K562 (cell line): ENCODE measurements at regions of chr9 and their contacts with region 1.

Region 1: GRCh38 chr9:129177791-129178559 is at the start of gene IER5L:
- DNase-seq: peak; percentile 96 to 100 (median 100)
- ATAC-seq: peak; percentile 91
- H3K4me3 ChIP-seq: peak within 1 kb of the TSS; percentile 61
- H3K27ac ChIP-seq: peak within 1 kb of the TSS; percentile 49; the same call in 1 of the 3 replicates
- H3K4me1 ChIP-seq: peaks cover 19 to 64% of the 10 kb centered on the region in 2 experiments; a peak in 4 of 5 replicates
- H3K27me3 ChIP-seq: peaks cover 7 to 8% of the 10 kb centered on the region in 2 experiments; a peak in 3 of 5 replicates
- CTCF ChIP-seq: 0 out of 6 replicates have a peak, but pooled peaks of 1 of the 3 experiments have one; percentile 0
- EP300 ChIP-seq: no peak
- POLR2A ChIP-seq: peak; percentile 88
- RAD21 ChIP-seq: no peak; a peak in 1 of 4 replicates
- polyA plus RNA-seq, gene IER5L: 0.14 to 0.18 TPM

Region 2: DNA sequence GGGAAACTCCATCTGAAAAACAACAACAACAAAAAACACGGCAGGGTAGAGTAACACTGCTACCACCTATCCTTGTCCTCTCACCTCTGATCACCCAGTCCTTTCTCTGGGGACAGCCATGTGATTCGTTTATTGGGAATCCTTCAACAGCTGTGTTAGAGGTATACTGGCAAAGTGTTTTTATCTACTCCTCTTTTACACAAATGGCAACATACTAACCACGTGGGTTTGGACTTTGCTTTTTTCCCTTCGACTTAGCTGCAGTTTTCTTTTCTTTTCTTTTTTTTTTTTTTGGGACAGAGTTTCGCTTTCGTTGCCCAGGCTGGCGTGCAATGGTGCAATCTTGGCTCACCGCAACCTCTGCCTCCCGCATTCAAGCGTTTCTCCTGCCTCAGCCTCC is 500.2 kb before region 1 on chr9:
- CTCF ChIA-PET with region 1: no interaction called
- POLR2A ChIA-PET with region 1: no interaction called
- in situ Hi-C with region 1: no loop called
- intact Hi-C with region 1: no loop called
- DNase-seq: peak in 2 of 4 experiments; percentile 10 to 19
- ATAC-seq: peak; percentile 20; the same call in 2 of the 3 replicates
- H3K4me3 ChIP-seq: no peak overlapping the region
- H3K27ac ChIP-seq: no peak overlapping the region
- H3K4me1 ChIP-seq: peaks cover 2 to 11% of the 10 kb centered on the region in 2 experiments; a peak in 2 of 5 replicates
- H3K27me3 ChIP-seq: no peaks in the 10 kb centered on the region
- CTCF ChIP-seq: no peak
- EP300 ChIP-seq: no peak
- POLR2A ChIP-seq: no peak
- RAD21 ChIP-seq: no peak

Region 3: GRCh38 chr9:129068990-129069861 is 108.7 kb before region 1 on chr9:
- CTCF ChIA-PET with region 1: no interaction called
- POLR2A ChIA-PET with region 1: no interaction called
- in situ Hi-C with region 1: no loop called
- intact Hi-C with region 1: no loop called
- DNase-seq: peak; percentile 83 to 98 (median 90)
- ATAC-seq: peak; percentile 98
- H3K4me3 ChIP-seq: no peak overlapping the region
- H3K27ac ChIP-seq: peak overlapping the region; percentile 92
- H3K4me1 ChIP-seq: peaks cover 44 to 54% of the 10 kb centered on the region in 2 experiments
- H3K27me3 ChIP-seq: no peaks in the 10 kb centered on the region
- CTCF ChIP-seq: peak; percentile 26 to 47 (median 36); a peak in 4 of 6 replicates
- EP300 ChIP-seq: peak; percentile 97
- POLR2A ChIP-seq: no peak
- RAD21 ChIP-seq: peak in 1 of 2 experiments; percentile 18; a peak in 1 of 4 replicates

Region 4: GRCh38 chr9:129166623-129167557 is 11.1 kb before region 1 on chr9:
- CTCF ChIA-PET with region 1: no interaction called
- POLR2A ChIA-PET with region 1: interaction called, 11 read pairs
- in situ Hi-C with region 1: no loop called
- intact Hi-C with region 1: no loop called
- DNase-seq: peak; percentile 82 to 92 (median 90)
- ATAC-seq: peak; percentile 87
- H3K4me3 ChIP-seq: peak overlapping the region; percentile 34
- H3K27ac ChIP-seq: peak overlapping the region; percentile 50
- H3K4me1 ChIP-seq: peaks cover 29 to 33% of the 10 kb centered on the region in 2 experiments
- H3K27me3 ChIP-seq: peaks cover 0 to 1% of the 10 kb centered on the region in 2 experiments; a peak in 1 of 5 replicates
- CTCF ChIP-seq: no peak
- EP300 ChIP-seq: no peak
- POLR2A ChIP-seq: no peak
- RAD21 ChIP-seq: no peak

Region 5: DNA sequence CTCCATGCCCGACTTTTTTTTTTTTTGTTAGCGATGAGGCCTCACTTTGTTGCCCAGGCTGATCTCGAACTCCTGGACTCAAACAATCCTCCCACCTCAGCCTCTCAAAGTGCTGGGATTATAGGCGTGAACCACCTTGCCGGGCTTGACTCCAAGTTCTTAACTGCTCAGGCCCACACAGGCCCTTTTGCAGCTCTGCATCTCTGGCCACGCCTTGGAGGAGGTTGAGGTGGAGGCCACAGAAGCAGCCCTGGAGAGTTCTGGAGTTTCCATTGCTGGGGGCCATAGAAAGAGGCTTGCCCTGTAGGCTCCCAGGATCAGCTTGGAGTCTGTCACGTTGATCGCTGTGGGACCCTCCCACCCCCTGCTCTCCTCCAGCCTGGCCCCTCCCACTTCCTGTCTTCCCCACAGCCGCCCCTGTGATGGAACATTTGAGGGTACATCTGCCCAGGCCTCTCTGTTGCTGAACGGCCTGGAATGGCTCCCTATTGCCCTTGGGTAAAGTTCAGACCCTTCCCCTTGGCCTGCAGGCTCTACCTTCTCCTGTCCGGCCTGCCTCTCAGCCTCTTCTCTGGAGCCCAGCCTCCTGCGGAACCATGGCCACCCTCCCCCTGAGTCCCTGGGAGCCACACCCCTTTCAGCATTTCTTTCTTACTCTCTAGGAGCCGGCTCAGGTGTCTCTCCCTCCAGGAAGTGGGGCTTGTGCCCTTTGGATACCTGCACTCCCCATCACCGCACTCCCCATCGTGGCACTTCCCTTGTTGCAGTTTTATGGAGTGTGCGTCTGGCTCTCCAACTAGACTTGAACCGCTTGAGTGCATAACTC is 30.4 kb after region 1 on chr9:
- CTCF ChIA-PET with region 1: no interaction called
- POLR2A ChIA-PET with region 1: no interaction called
- in situ Hi-C with region 1: no loop called
- intact Hi-C with region 1: no loop called
- DNase-seq: peak; percentile 51 to 71 (median 68)
- ATAC-seq: peak; percentile 78
- H3K4me3 ChIP-seq: no peak overlapping the region
- H3K27ac ChIP-seq: no peak overlapping the region
- H3K4me1 ChIP-seq: peaks cover 9 to 17% of the 10 kb centered on the region in 2 experiments
- H3K27me3 ChIP-seq: no peaks in the 10 kb centered on the region
- CTCF ChIP-seq: no peak
- EP300 ChIP-seq: no peak
- POLR2A ChIP-seq: no peak
- RAD21 ChIP-seq: no peak

Region 6: DNA sequence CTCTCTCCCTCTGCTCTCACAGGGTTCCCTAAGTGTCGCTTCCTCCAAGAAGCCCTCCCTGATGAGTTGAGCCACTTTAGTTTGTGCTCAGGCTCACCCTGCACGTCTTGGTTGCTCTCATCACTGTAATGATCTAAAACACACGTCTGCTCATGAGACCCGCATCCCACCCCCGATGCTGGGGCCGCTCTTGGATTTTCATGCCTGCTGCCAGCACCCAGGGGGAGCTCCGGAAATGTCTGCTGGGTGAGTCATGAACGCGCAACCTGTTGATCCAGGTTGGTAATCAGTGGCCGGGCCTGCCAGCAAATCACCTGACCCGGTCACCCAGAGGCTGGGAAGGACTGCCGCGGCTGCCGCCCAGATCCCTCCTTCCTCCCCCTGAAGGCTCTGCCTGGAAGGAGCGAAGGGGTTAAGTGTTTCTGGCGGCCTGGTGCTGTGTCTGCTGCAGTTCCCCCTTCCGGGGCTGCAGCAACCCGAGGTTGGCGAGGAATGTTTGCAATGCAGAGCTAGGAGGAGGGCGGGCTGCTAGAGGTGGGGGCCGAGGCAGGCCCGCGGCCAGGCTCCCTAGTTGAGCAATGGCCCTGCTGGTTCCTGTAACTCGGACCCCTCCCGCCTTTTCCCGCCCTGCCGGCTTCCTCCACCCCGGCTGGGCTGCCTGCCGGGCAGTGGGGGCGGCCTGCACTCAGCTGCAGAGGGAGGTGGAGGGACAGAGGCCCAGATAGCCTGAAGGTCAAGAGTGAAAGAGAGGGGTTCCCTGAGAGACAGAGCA is 156.2 kb after region 1 on chr9:
- CTCF ChIA-PET with region 1: no interaction called
- POLR2A ChIA-PET with region 1: interaction called, 3 read pairs
- in situ Hi-C with region 1: no loop called
- intact Hi-C with region 1: loop called (anchors 5 kb)
- DNase-seq: peak; percentile 63 to 69 (median 66)
- ATAC-seq: peak; percentile 79
- H3K4me3 ChIP-seq: peak overlapping the region; percentile 10
- H3K27ac ChIP-seq: peak overlapping the region; percentile 63; the same call in 1 of the 3 replicates
- H3K4me1 ChIP-seq: peaks cover 14 to 32% of the 10 kb centered on the region in 2 experiments
- H3K27me3 ChIP-seq: no peaks in the 10 kb centered on the region
- CTCF ChIP-seq: 0 out of 6 replicates have a peak, but pooled peaks of 1 of the 3 experiments have one; percentile 3
- EP300 ChIP-seq: no peak; the same call in 1 of the 2 replicates
- POLR2A ChIP-seq: no peak
- RAD21 ChIP-seq: no peak

Region 7: GRCh38 chr9:129413537-129414376 is 235.8 kb after region 1 on chr9:
- CTCF ChIA-PET with region 1: no interaction called
- POLR2A ChIA-PET with region 1: no interaction called
- in situ Hi-C with region 1: loop called (anchors 10 kb)
- intact Hi-C with region 1: loop called (anchors 10 kb)
- DNase-seq: peak; percentile 96 to 98 (median 96)
- ATAC-seq: peak; percentile 87
- H3K4me3 ChIP-seq: peak overlapping the region; percentile 53
- H3K27ac ChIP-seq: peak overlapping the region; percentile 99
- H3K4me1 ChIP-seq: peaks cover 45 to 55% of the 10 kb centered on the region in 2 experiments
- H3K27me3 ChIP-seq: no peaks in the 10 kb centered on the region
- CTCF ChIP-seq: no peak
- EP300 ChIP-seq: peak; percentile 57; the same call in 1 of the 2 replicates
- POLR2A ChIP-seq: peak; percentile 72
- RAD21 ChIP-seq: no peak

Region 8: GRCh38 chr9:129487642-129488409 is 309.9 kb after region 1 on chr9:
- CTCF ChIA-PET with region 1: no interaction called
- POLR2A ChIA-PET with region 1: interaction called, 6 read pairs
- in situ Hi-C with region 1: loop called (anchors 10 kb)
- intact Hi-C with region 1: loop called (anchors 2 kb)
- DNase-seq: peak; percentile 66 to 77 (median 72)
- ATAC-seq: peak; percentile 38
- H3K4me3 ChIP-seq: peak overlapping the region; percentile 67
- H3K27ac ChIP-seq: peak overlapping the region; percentile 100
- H3K4me1 ChIP-seq: peaks cover 71 to 84% of the 10 kb centered on the region in 2 experiments
- H3K27me3 ChIP-seq: no peaks in the 10 kb centered on the region
- CTCF ChIP-seq: no peak
- EP300 ChIP-seq: no peak
- POLR2A ChIP-seq: peak; percentile 17
- RAD21 ChIP-seq: no peak